Panc1 (cell line): ENCODE measurements at regions of chr15 and their contacts with region 1.

Region 1: DNA sequence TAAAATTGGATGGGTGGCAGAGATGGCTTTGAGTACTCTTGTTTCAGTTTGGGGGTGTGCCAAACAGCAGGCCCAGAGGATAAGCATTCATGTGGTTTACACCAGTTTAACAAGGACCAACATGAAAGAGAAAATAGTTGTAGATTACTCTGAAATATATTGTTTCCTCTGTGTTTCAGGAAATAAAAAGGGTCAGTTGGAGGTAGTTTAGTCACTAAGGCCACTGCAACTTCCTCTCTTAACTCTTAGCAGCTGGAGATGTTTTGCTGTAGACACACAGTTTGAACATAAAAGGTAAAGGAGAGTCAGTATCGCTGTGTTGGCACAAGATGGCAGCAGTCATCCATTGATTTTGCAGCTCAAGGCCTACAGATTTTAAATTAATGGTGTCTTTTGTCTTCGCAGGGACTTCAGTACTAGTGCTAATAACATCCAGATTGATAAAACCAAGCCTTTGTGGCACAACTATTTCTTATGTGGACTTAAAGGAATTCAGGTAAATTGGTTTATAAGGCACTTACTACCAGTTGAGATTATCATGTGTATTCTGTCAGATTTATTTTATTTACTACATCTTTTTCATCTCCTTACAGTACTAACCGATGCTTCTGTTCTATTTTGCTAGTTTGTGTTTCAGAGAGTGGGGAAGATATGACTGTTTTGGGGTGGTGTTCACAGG is 65.5 kb downstream of the GALK2 start:
- DNase-seq: peak; percentile 56
- ATAC-seq: peak; percentile 93
- H3K4me3 ChIP-seq: no peak overlapping the region
- H3K27ac ChIP-seq: no peak overlapping the region
- H3K4me1 ChIP-seq: no peaks in the 10 kb centered on the region
- H3K27me3 ChIP-seq: no peaks in the 10 kb centered on the region
- CTCF ChIP-seq: peak; percentile 79

Region 2: GRCh38 chr15:49421991-49422390 is 186.4 kb after region 1 on chr15:
- CTCF ChIA-PET with region 1: interaction called, 3 read pairs
- POLR2A ChIA-PET with region 1: no interaction called
- in situ Hi-C with region 1: no loop called
- intact Hi-C with region 1: loop called (anchors 1 kb)
- DNase-seq: no peak
- ATAC-seq: 0 out of 2 replicates have a peak, but pooled peaks have one; percentile 56
- H3K4me3 ChIP-seq: no peak overlapping the region
- H3K27ac ChIP-seq: no peak overlapping the region
- H3K4me1 ChIP-seq: no peaks in the 10 kb centered on the region
- H3K27me3 ChIP-seq: peaks cover 2% of the 10 kb centered on the region; the same call in 1 of the 2 replicates
- CTCF ChIP-seq: peak; percentile 79

Region 3: GRCh38 chr15:49589030-49589429 is 353.4 kb after region 1 on chr15:
- CTCF ChIA-PET with region 1: no interaction called
- POLR2A ChIA-PET with region 1: no interaction called
- in situ Hi-C with region 1: no loop called
- intact Hi-C with region 1: loop called (anchors 10 kb)
- DNase-seq: no peak
- ATAC-seq: no peak
- H3K4me3 ChIP-seq: no peak overlapping the region
- H3K27ac ChIP-seq: no peak overlapping the region
- H3K4me1 ChIP-seq: no peaks in the 10 kb centered on the region
- H3K27me3 ChIP-seq: no peaks in the 10 kb centered on the region
- CTCF ChIP-seq: no peak

Region 4: DNA sequence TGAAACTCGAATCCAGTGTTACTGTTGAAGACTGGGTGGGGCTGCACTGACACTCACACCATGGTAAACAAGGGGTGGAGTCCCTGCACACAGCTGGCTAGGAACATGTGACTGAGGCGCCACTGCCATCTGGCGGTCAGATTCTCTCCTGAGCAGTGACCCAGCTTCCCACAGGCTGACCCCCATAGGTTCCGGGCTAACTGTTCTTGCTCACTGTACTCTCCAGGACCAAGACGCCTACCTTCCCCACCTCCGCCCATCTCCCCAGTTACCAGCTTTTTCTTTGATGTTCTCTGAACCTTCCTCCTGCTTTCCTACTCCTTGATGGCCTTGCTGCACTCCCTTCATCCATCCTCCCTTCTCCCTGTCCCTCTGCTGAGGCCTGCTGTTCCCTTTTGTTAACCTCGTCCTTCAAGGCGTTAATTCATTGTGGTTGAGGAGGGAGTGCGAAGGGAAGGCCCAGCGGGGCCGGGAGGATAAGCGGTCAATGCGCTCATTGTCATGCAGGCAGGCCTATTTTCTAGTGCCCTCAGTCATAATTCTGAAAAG is 768.3 kb after region 1 on chr15:
- CTCF ChIA-PET with region 1: no interaction called
- POLR2A ChIA-PET with region 1: no interaction called
- in situ Hi-C with region 1: no loop called
- intact Hi-C with region 1: loop called (anchors 5 kb)
- DNase-seq: peak; percentile 71
- ATAC-seq: peak; percentile 100
- H3K4me3 ChIP-seq: no peak overlapping the region
- H3K27ac ChIP-seq: no peak overlapping the region
- H3K4me1 ChIP-seq: no peaks in the 10 kb centered on the region
- H3K27me3 ChIP-seq: no peaks in the 10 kb centered on the region
- CTCF ChIP-seq: peak; percentile 88

Region 5: GRCh38 chr15:50145451-50145872 is 909.9 kb after region 1 on chr15:
- CTCF ChIA-PET with region 1: no interaction called
- POLR2A ChIA-PET with region 1: no interaction called
- in situ Hi-C with region 1: no loop called
- intact Hi-C with region 1: loop called (anchors 10 kb)
- DNase-seq: peak; percentile 45
- ATAC-seq: peak; percentile 89
- H3K4me3 ChIP-seq: no peak overlapping the region
- H3K27ac ChIP-seq: no peak overlapping the region
- H3K4me1 ChIP-seq: no peaks in the 10 kb centered on the region
- H3K27me3 ChIP-seq: no peaks in the 10 kb centered on the region
- CTCF ChIP-seq: peak; percentile 56; the same call in 1 of the 2 replicates

Region 6: DNA sequence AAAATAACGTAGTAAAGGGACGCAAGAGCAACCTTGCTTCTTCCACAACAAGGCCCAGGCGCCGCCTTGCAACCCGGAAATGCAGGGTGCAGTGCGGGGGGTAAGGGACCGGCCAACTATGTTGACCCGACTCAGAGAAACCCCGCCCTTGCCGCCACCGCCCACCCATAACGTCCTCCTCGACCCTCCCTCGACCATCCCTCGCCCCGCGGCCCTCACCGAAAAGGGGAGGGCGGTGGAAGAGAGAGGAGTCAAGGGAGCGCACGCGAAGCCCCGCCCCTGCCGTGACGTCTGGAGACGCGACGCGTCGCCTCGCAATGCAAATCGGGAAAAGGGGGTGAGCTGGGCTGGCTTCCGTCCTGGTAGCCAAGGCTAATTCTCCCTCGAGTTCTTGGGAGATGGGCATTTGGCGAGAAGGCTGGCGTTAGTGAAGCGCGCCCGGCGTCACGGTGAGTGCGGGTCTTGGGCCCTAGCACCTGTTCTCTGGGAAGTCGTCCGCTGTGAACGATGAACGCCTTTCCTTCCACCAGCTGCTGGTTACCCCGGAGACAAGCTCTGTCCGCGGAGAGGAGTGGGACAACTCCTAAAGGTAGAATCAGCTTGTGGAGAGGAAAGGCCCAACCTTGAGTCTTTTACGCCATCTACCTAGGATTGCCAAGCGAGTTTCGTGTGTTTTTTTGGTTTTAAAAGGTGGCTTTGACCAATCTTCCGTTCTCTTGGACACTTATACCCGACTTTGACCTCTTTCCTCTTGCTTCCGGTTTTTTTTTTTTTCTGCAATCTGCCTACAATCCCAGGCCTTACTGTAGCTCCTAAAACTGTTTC is 1188.7 kb after region 1 on chr15 and contains the start of gene USP8:
- CTCF ChIA-PET with region 1: no interaction called
- POLR2A ChIA-PET with region 1: interaction called, 10 read pairs
- in situ Hi-C with region 1: no loop called
- intact Hi-C with region 1: no loop called
- DNase-seq: peak; percentile 93
- ATAC-seq: peak; percentile 99
- H3K4me3 ChIP-seq: peak within 1 kb of the TSS; percentile 90 to 96
- H3K27ac ChIP-seq: peak within 1 kb of the TSS; percentile 98
- H3K4me1 ChIP-seq: peaks cover 10% of the 10 kb centered on the region; the same call in 1 of the 2 replicates
- H3K27me3 ChIP-seq: no peaks in the 10 kb centered on the region
- CTCF ChIP-seq: no peak
- total RNA-seq, gene USP8: 57.3 TPM